Endothelial cell of umbilical vein (primary cell): ENCODE measurements at regions of chr16 and their contacts with region 1.

Region 1: DNA sequence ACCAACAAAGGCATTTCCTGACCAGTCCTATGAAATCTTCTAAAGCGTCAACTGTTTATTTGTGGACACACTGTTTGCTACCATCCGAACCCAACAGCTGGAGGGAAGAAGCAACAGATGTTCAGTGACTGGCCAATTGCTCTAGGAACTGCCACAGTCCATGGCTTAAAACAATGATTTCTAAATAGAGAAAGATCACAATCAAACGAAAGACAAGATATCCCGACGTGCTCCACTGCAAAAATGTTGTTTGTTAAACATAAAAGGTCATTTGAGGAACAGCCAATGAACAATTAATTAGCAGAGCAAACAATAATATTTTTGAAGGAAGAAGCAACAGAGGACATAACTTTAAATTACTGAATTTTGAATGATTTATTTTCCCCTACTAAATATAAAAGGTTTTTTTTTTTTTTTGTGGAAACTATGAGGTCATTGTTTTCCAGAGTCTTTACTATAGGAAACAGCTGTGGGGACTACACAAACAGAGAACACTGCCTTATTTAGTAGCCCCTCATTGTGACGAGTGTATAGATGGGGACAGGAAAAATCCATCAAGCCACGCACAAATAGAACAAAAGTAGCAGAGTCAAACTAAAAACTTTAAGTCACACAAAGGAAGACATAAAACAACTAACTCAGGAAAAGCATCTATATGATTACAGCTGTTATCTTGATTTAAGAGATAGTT is 17.2 kb downstream of the USP31 start:
- DNase-seq: peak; percentile 96
- H3K4me3 ChIP-seq: peak overlapping the region in 1 of 3 experiments; percentile 43
- H3K27ac ChIP-seq: peak overlapping the region; percentile 97
- H3K4me1 ChIP-seq: peaks cover 45% of the 10 kb centered on the region
- H3K27me3 ChIP-seq: no peaks in the 10 kb centered on the region
- CTCF ChIP-seq: no peak
- POLR2A ChIP-seq: peak; percentile 31

Region 2: DNA sequence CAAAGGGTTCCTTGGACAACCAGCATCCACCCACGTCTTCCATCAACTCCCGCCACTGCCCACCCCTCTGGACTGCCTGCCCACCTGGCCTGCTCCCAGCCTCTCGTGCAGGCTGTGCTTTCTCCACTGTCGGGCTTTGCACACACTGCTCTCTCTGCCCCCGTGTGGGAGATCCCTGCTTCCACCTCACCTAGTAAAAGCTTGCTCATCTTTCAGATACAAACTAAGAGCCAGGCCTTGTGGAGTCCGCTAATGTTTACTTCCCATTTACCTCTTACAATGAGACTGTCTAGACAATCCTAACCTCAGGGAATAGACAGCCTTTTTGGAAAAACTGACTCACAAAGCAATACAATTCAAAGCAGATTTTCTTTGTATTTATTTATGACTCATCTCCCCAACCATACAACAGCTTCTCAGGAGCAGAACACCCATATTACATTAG is 50.4 kb before region 1 on chr16:
- CTCF ChIA-PET with region 1: no interaction called
- POLR2A ChIA-PET with region 1: no interaction called
- dilution Hi-C with region 1: no loop called
- intact Hi-C with region 1: loop called (anchors 1 kb)
- DNase-seq: peak; percentile 75
- H3K4me3 ChIP-seq: no peak overlapping the region
- H3K27ac ChIP-seq: peak overlapping the region; percentile 50
- H3K4me1 ChIP-seq: peaks cover 34% of the 10 kb centered on the region
- H3K27me3 ChIP-seq: no peaks in the 10 kb centered on the region
- CTCF ChIP-seq: no peak
- POLR2A ChIP-seq: no peak

Region 3: GRCh38 chr16:23149349-23149996 is 17.4 kb after region 1 on chr16 and contains the start of gene USP31:
- CTCF ChIA-PET with region 1: interaction called, 10 read pairs
- POLR2A ChIA-PET with region 1: interaction called, 7 read pairs
- dilution Hi-C with region 1: no loop called
- intact Hi-C with region 1: loop called (anchors 1 kb)
- DNase-seq: peak; percentile 96
- H3K4me3 ChIP-seq: peak within 1 kb of the TSS; percentile 75 to 91 (median 84)
- H3K27ac ChIP-seq: peak within 1 kb of the TSS; percentile 51
- H3K4me1 ChIP-seq: peaks cover 21% of the 10 kb centered on the region
- H3K27me3 ChIP-seq: no peaks in the 10 kb centered on the region
- CTCF ChIP-seq: no peak
- POLR2A ChIP-seq: no peak
- total RNA-seq, gene USP31: 37.4 and 42.4 TPM in 2 replicates

Region 4: DNA sequence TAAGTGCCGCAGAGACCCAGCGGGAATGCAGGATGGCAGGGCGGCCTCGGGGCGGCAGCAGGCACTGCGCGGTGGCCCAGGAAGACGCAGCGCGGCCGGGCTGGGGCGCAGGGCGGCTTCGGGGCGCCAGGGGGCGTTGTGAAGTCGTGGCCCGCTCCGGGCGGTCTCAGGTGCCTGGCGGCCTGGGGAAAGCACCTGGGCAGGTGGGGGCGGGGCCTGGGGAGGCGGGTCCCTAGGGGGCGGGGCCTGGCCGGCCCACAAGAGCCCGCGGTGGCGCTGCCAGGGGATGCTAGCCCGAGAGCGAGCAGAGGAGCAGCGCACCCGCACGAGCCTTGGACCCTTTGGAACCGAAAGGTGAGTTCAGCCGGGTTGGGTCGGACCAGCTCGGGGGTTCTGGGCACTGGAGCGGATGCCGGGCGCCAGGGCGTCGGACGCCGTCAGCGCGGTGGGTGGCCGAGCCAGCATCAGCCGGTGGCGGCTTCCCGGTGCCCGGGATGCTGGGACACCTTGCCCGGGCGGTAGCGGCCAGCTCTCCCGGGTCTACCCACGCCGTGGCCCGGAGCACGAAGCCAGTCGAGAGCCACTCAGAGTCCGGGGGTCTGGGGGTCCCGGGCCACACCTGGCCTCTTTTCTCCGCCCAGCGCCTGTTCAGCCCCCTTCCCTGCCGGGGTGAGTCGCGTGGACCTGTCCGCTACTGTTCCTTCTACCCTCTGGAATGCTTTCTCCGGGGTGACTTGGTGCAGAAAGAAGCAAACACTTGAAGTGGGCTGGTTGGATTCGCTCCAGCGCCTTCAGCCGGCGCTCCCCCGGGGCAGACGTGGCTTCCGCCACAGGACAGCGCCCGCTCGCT is 50.6 kb after region 1 on chr16 and contains the start of gene SCNN1G:
- CTCF ChIA-PET with region 1: no interaction called
- POLR2A ChIA-PET with region 1: no interaction called
- dilution Hi-C with region 1: no loop called
- intact Hi-C with region 1: loop called (anchors 1 kb)
- DNase-seq: peak; percentile 56
- H3K4me3 ChIP-seq: peak within 1 kb of the TSS in 1 of 3 experiments; percentile 1
- H3K27ac ChIP-seq: no peak within 1 kb of the TSS
- H3K4me1 ChIP-seq: peaks cover 5% of the 10 kb centered on the region
- H3K27me3 ChIP-seq: peaks cover 29 to 30% of the 10 kb centered on the region in 2 experiments
- CTCF ChIP-seq: peak; percentile 86 to 87
- POLR2A ChIP-seq: no peak
- total RNA-seq, gene SCNN1G: not detected in 2 replicates

Region 5: DNA sequence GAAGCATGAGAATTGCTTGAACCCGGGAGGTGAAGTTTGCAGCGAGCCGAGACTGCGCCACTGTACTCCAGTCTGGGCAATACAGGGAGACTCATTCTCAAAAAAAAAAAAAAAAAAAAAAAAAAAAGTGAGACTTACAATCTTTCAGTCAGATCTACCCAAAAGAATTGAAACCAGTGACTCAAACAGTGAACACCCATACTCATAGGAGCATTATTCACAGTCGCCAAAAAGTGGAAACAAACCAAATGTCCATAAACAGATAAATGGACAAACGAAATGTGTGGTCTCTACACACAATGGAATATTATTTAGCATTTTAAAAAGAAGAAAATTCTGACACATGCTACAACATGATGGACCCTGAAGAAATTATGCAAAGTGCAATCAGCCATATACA is 160.9 kb after region 1 on chr16:
- CTCF ChIA-PET with region 1: no interaction called
- POLR2A ChIA-PET with region 1: no interaction called
- dilution Hi-C with region 1: no loop called
- intact Hi-C with region 1: no loop called
- DNase-seq: no peak
- H3K4me3 ChIP-seq: no peak overlapping the region
- H3K27ac ChIP-seq: no peak overlapping the region
- H3K4me1 ChIP-seq: no peaks in the 10 kb centered on the region
- H3K27me3 ChIP-seq: no peaks in the 10 kb centered on the region
- CTCF ChIP-seq: no peak
- POLR2A ChIP-seq: no peak

Region 6: GRCh38 chr16:23423496-23424049 is 291.5 kb after region 1 on chr16:
- CTCF ChIA-PET with region 1: interaction called, 3 read pairs
- POLR2A ChIA-PET with region 1: no interaction called
- dilution Hi-C with region 1: no loop called
- intact Hi-C with region 1: loop called (anchors 1 kb)
- DNase-seq: peak; percentile 100
- H3K4me3 ChIP-seq: no peak overlapping the region
- H3K27ac ChIP-seq: peak overlapping the region; percentile 96
- H3K4me1 ChIP-seq: peaks cover 24% of the 10 kb centered on the region
- H3K27me3 ChIP-seq: no peaks in the 10 kb centered on the region
- CTCF ChIP-seq: no peak
- POLR2A ChIP-seq: no peak